A673 (cell line): ENCODE measurements at regions of chr9 and their contacts with region 1.

Region 1: GRCh38 chr9:2181792-2182191 is 166.6 kb downstream of the SMARCA2 start:
- DNase-seq: peak; percentile 75
- H3K4me3 ChIP-seq: no peak overlapping the region
- H3K27ac ChIP-seq: no peak overlapping the region
- H3K4me1 ChIP-seq: peaks cover 13% of the 10 kb centered on the region
- H3K27me3 ChIP-seq: no peaks in the 10 kb centered on the region
- CTCF ChIP-seq: peak; percentile 84

Region 2: DNA sequence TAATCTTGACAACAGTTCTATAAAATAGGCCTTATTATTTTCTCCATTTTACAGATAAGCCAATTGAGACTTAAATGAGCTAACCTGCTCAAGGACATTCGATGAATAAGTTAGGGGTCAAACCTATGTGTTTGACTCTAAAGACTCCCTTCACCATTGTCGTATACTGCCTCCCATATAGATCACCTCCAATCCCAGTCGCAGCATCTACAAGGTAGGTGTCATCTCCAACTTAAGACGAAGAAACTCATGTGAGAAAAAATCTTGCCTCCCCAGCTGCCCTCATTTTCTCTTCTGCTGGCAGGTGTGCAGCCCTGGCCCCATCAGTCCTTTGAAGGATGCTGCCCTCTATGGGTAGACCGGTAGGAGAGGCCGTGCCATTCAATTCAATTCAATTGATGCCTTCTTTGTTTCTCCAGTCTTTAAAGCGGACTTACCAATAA is 241.8 kb before region 1 on chr9:
- CTCF ChIA-PET with region 1: no interaction called
- POLR2A ChIA-PET with region 1: no interaction called
- intact Hi-C with region 1: loop called (anchors 10 kb)
- DNase-seq: peak; percentile 48
- H3K4me3 ChIP-seq: no peak overlapping the region
- H3K27ac ChIP-seq: no peak overlapping the region
- H3K4me1 ChIP-seq: no peaks in the 10 kb centered on the region
- H3K27me3 ChIP-seq: no peaks in the 10 kb centered on the region
- CTCF ChIP-seq: peak; percentile 90

Region 3: GRCh38 chr9:2132484-2133082 is 49.2 kb before region 1 on chr9:
- CTCF ChIA-PET with region 1: interaction called, 7 read pairs
- POLR2A ChIA-PET with region 1: interaction called, 4 read pairs
- intact Hi-C with region 1: loop called (anchors 1 kb)
- DNase-seq: peak; percentile 68
- H3K4me3 ChIP-seq: no peak overlapping the region
- H3K27ac ChIP-seq: no peak overlapping the region
- H3K4me1 ChIP-seq: no peaks in the 10 kb centered on the region
- H3K27me3 ChIP-seq: no peaks in the 10 kb centered on the region
- CTCF ChIP-seq: peak; percentile 80

Region 4: DNA sequence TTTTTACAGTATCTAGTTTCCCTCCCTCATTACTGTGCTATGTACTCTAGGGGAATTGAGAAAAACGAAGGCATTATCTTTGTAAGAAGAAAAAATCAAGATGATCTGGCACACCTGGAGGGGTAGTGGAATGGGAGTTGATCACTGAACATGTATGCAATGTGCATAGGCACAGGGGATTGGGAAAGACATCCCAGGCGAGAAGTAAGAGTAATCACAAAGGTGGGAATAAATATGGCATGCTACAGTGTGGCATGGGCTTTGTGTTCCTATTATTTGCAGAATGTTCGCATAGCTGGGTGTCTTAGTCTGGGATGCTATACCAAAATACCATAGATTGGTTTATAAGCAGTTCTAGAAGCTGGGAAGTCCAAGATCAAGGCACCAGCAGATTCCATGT is 36.0 kb before region 1 on chr9:
- CTCF ChIA-PET with region 1: no interaction called
- POLR2A ChIA-PET with region 1: no interaction called
- intact Hi-C with region 1: loop called (anchors 2 kb)
- DNase-seq: no peak
- H3K4me3 ChIP-seq: no peak overlapping the region
- H3K27ac ChIP-seq: no peak overlapping the region
- H3K4me1 ChIP-seq: peaks cover 4% of the 10 kb centered on the region
- H3K27me3 ChIP-seq: no peaks in the 10 kb centered on the region
- CTCF ChIP-seq: no peak

Region 5: DNA sequence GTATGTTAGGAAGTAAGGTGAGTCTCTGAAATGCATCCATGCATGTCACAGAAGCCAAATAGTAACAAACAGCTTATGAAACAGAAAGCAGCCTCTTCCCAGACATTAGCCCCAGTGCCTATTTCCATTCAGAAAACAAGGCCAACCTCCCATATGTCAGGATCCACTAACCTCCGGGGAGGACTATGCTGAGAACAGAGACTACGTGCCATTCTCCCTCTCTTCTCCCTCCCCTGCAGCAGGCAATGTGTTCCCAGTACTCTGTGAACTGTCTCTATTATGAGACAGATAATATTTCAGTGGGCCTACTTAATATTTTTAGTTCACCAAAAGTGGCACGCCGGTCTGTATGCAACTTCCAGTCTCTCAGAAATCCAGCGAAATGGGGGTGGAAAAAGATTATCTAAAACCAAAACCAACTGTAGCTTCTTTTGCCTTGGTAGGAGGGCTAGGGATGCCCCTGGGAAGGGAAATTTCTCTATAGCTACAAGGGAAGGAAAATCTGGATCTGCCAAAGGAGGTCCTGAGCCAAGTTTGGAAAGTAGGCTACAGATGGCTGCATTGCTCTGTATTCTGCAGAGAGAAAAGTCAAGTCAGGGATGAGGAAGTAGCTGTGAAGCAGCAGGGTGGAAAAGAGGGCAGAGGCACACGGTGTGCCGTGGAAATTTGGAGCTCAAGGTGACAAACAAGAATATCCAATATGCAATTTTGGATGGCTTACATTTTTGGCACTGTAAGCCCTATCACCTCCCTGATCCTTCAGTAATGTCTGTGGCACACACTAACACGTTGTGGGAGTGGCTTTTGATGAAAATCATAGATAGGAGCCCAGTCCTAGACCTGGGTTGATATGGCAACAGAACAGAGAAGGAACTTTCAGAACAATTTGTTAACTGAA is 481.9 kb after region 1 on chr9:
- CTCF ChIA-PET with region 1: no interaction called
- POLR2A ChIA-PET with region 1: no interaction called
- intact Hi-C with region 1: no loop called
- DNase-seq: no peak
- H3K4me3 ChIP-seq: no peak overlapping the region
- H3K27ac ChIP-seq: no peak overlapping the region
- H3K4me1 ChIP-seq: no peaks in the 10 kb centered on the region
- H3K27me3 ChIP-seq: no peaks in the 10 kb centered on the region
- CTCF ChIP-seq: no peak